ENCODE measurements at regions of chr21 and their contacts with region 1.

Region 1: GRCh38 chr21:31332525-31332924 is 11.5 kb downstream of the TIAM1 start:
- DNase-seq: no peak
- ATAC-seq: no peak
- H3K4me3 ChIP-seq: no peak overlapping the region
- H3K4me3 Mint-ChIP-seq: no peak overlapping the region
- H3K27ac ChIP-seq: no peak overlapping the region
- H3K27ac Mint-ChIP-seq: no peak overlapping the region
- H3K4me1 ChIP-seq: no peaks in the 10 kb centered on the region
- H3K4me1 Mint-ChIP-seq: peaks cover 20 to 34% (median 24%) of the 10 kb centered on the region in 3 donors
- H3K27me3 ChIP-seq: no peaks in the 10 kb centered on the region
- H3K27me3 Mint-ChIP-seq: no peaks in the 10 kb centered on the region

Region 2: DNA sequence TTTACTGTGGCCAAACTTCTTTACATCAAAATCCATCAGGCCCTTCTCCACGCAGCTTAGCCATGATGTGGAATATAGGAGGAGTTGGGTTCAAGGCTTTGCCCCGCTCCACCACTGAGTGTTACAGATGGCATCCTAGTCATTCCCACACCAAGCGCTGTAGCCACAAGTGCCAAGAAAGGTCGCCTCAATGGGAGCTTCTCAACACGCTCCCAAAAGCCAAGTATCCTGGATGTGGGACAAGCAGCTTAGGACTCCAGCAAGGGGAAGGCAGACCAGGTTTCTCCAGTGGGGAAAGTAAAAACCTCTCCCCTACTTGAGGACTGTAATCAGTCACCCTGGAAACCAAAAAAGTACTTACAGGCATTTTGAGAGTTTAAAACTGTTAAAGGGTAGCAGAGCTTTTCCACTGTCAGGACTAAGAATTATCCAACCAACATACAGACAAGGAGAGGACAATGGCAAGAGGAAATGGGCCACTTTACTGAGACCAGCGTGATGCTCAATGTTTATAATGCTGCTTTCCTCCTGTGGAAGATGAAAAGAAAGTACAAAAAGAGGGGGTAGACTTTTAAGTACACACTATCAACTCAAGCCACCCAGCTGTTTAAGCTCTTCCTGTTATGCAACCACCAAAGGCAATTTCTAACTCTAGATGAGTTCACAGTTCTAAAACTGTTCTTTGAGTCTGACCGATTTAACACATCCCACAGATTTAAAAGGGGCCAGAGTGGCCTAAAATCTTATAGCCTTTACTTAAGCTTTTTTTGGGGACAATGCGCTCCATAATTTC is 173.5 kb before region 1 on chr21:
- CTCF ChIA-PET with region 1: no interaction called
- POLR2A ChIA-PET with region 1: interaction called in 1 of 2 experiments, 13 read pairs
- DNase-seq: peak in 6 of 35 experiments; percentile 18 to 57 (median 34)
- ATAC-seq: peak; percentile 89 to 95 (median 95)
- H3K4me3 ChIP-seq: peak overlapping the region in 1 of 2 donors; percentile 17
- H3K4me3 Mint-ChIP-seq: peak overlapping the region; percentile 65 to 71 (median 66)
- H3K27ac ChIP-seq: peak overlapping the region; percentile 73
- H3K27ac Mint-ChIP-seq: peak overlapping the region; percentile 92 to 98
- H3K4me1 ChIP-seq: peaks cover 44 to 51% of the 10 kb centered on the region in 2 experiments
- H3K4me1 Mint-ChIP-seq: peaks cover 68 to 84% (median 81%) of the 10 kb centered on the region in 3 donors
- H3K27me3 ChIP-seq: no peaks in the 10 kb centered on the region
- H3K27me3 Mint-ChIP-seq: no peaks in the 10 kb centered on the region

Region 3: DNA sequence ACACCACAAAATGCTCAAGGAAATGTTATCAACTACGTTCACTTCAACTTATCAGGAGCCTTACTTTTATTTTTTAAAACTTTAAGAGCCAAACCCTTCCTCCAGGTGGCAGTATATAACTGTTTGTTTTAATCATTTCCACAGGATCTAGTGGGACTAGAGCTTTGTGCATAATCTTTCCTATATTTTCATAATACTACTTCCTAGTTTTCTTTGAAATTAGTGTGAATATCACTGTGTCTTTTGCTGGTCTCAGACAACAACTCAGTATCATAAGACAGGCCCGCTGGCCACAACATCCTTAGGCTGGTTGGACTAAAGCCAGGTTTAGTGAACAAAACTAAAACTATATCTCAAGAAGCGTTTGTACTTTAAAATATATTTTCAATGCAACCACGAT is 133.9 kb before region 1 on chr21:
- CTCF ChIA-PET with region 1: no interaction called
- POLR2A ChIA-PET with region 1: interaction called in 1 of 2 experiments, 13 read pairs
- DNase-seq: peak in 2 of 35 experiments; percentile 20 to 69
- ATAC-seq: peak; percentile 48 to 67 (median 58)
- H3K4me3 ChIP-seq: no peak overlapping the region
- H3K4me3 Mint-ChIP-seq: no peak overlapping the region
- H3K27ac ChIP-seq: no peak overlapping the region
- H3K27ac Mint-ChIP-seq: no peak overlapping the region
- H3K4me1 ChIP-seq: no peaks in the 10 kb centered on the region
- H3K4me1 Mint-ChIP-seq: peaks cover 19 to 39% (median 29%) of the 10 kb centered on the region in 3 donors
- H3K27me3 ChIP-seq: no peaks in the 10 kb centered on the region
- H3K27me3 Mint-ChIP-seq: no peaks in the 10 kb centered on the region

Region 4: GRCh38 chr21:31282095-31282709 is 50.3 kb before region 1 on chr21:
- CTCF ChIA-PET with region 1: no interaction called
- POLR2A ChIA-PET with region 1: no interaction called
- DNase-seq: no peak
- ATAC-seq: no peak
- H3K4me3 ChIP-seq: no peak overlapping the region
- H3K4me3 Mint-ChIP-seq: peak overlapping the region in 1 of 3 donors; percentile 33
- H3K27ac ChIP-seq: peak overlapping the region; percentile 12
- H3K27ac Mint-ChIP-seq: peak overlapping the region; percentile 40 to 89
- H3K4me1 ChIP-seq: peaks cover 8 to 18% of the 10 kb centered on the region in 2 experiments
- H3K4me1 Mint-ChIP-seq: peaks cover 31 to 36% (median 34%) of the 10 kb centered on the region in 3 donors
- H3K27me3 ChIP-seq: no peaks in the 10 kb centered on the region
- H3K27me3 Mint-ChIP-seq: no peaks in the 10 kb centered on the region

Measured in T-cell (primary cell).